ENCODE measurements at regions of chr3 and their contacts with region 1.

Region 1: DNA sequence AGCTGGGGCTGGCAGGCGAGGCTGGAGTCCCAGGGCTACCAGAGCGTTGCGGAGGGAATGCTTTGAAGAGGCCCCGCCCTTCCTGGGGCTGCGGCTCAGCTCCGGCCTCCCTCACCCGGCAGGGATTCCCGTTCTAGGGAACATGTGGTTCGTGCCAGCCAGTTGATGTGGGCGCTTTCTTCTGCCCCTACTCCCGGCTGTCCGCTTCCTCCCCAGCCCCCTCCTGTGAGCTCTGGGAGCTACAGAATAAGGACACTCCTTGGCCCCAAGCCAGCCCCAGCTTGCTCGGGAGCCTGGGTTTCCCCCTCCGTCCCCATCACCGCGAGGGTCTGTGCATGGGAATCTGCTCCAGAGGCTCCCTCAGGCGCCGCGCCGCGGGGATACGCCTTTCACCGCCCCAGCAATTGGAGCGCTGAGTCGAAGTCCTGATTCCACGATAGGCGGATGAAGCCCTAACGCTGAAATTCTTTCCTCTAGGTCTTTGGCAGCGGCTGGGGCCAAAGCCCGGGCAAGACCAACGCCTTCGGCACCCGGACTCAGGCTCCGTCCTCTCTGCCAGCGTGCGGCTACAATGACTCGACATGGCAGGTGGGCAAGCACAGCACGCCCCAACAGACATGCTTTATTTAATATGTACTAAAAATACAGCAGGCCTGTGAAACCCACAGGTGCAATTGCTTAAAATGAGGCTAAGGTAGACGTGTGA is 69.5 kb downstream of the KLF15 start:
- DNase-seq: peak; percentile 37
- H3K4me3 ChIP-seq: peak overlapping the region; percentile 1 to 44 (median 39)
- H3K27ac ChIP-seq: peak overlapping the region; percentile 10
- H3K4me1 ChIP-seq: peaks cover 30% of the 10 kb centered on the region
- H3K27me3 ChIP-seq: no peaks in the 10 kb centered on the region
- CTCF ChIP-seq: no peak

Region 2: DNA sequence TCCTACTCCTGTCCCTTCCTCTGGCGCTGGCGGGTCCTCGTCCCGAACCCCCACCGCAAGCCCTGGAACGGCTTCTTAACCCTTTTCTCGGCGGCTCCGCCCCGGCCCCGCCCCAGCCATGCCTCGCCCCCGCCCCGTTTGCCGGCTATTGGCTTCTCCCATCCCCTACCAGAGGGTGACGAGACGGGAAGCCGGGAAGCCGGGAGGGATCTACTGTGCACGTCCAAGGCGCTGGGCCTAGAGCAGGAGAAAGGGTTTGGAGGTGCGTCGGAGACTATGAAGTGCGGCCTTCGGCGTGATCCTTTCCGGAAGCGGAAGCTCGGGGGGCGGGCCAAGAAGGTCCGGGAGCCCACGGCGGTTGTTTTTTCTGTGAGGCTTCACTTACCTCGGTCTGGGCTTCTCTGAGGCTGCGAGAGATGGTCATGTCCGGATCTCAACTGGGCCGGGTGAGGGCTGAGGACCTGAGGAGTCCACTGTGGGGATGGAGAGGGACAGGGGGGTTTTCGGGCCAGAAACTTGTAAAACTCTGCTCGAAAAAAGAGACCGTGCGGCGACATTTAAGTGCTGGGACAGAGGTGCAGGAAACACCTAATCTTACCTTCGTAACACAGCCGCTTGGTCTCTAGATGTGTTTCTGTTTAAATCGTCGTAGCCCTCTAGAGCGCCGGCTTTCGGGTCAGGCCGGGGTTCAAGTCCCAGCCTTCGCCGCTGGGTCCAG is 297.3 kb before region 1 on chr3:
- CTCF ChIA-PET with region 1: no interaction called
- dilution Hi-C with region 1: no loop called
- in situ Hi-C with region 1: no loop called
- intact Hi-C with region 1: no loop called
- DNase-seq: peak; percentile 79
- H3K4me3 ChIP-seq: no peak overlapping the region
- H3K27ac ChIP-seq: no peak overlapping the region
- H3K4me1 ChIP-seq: no peaks in the 10 kb centered on the region
- H3K27me3 ChIP-seq: no peaks in the 10 kb centered on the region
- CTCF ChIP-seq: no peak

Region 3: GRCh38 chr3:126357295-126358037 is 69.8 kb after region 1 on chr3 and contains the start of gene KLF15:
- CTCF ChIA-PET with region 1: no interaction called
- dilution Hi-C with region 1: no loop called
- in situ Hi-C with region 1: no loop called
- intact Hi-C with region 1: loop called (anchors 5 kb)
- DNase-seq: peak; percentile 71
- H3K4me3 ChIP-seq: peak within 1 kb of the TSS; percentile 59 to 68 (median 64)
- H3K27ac ChIP-seq: no peak within 1 kb of the TSS
- H3K4me1 ChIP-seq: peaks cover 18% of the 10 kb centered on the region
- H3K27me3 ChIP-seq: peaks cover 10% of the 10 kb centered on the region
- CTCF ChIP-seq: no peak
- total RNA-seq, gene KLF15: 0.17 to 0.61 TPM